H1 (cell line): ENCODE measurements at regions of chrX and their contacts with region 1.

Region 1: GRCh38 chrX:8008530-8008929 is 81.3 kb upstream of the PNPLA4 start:
- DNase-seq: no peak
- H3K4me3 ChIP-seq: no peak overlapping the region
- H3K27ac ChIP-seq: no peak overlapping the region
- H3K4me1 ChIP-seq: no peaks in the 10 kb centered on the region; a peak in 1 of 7 replicates
- H3K27me3 ChIP-seq: no peaks in the 10 kb centered on the region
- CTCF ChIP-seq: no peak
- EP300 ChIP-seq: no peak
- POLR2A ChIP-seq: no peak
- RAD21 ChIP-seq: no peak

Region 2: GRCh38 chrX:8018934-8019333 is 10.4 kb after region 1 on chrX:
- CTCF ChIA-PET with region 1: interaction called, 14 read pairs
- POLR2A ChIA-PET with region 1: no interaction called
- DNase-seq: no peak
- H3K4me3 ChIP-seq: no peak overlapping the region
- H3K27ac ChIP-seq: no peak overlapping the region
- H3K4me1 ChIP-seq: no peaks in the 10 kb centered on the region
- H3K27me3 ChIP-seq: no peaks in the 10 kb centered on the region
- CTCF ChIP-seq: no peak
- EP300 ChIP-seq: no peak
- POLR2A ChIP-seq: no peak
- RAD21 ChIP-seq: no peak